GM12878 (cell line): ENCODE measurements at regions of chr6 and their contacts with region 1.

Region 1: DNA sequence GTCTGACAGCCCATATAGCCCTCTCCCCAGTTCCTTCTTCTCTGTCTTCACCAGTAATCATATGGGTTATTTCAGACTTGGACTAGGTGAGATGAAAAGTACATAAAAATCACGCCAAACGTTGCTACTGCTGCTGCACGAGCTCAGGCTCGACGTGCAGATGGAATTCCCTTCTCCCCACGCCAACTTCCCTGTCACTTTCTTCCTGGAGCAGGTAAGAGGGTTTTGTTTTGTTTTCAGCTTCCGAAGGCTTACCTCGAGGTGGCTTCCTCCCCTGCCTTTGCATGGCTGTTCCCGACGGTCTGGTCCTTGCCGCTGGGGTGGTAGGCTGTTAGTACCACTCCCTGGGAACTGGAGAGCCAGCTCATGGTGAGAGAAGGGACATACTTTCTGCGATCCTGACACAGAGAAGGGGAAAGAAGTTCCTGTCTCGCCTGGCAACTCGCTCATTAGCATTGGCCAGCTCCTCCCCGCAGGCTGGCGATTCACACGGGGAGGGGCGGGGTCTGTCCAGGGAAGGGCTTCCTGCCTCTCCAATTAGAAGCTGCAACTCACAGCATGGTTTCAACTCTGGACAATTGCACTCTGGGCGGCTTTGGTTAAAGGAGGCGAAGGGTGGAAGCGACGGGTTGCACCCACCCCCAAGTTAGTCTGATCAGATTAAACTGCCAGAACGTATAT is at the start of gene ARHGAP18:
- DNase-seq: peak; percentile 78
- ATAC-seq: peak; percentile 92
- H3K4me3 ChIP-seq: peak within 1 kb of the TSS; percentile 94
- H3K27ac ChIP-seq: peak within 1 kb of the TSS; percentile 73
- H3K4me1 ChIP-seq: peaks cover 17% of the 10 kb centered on the region
- H3K27me3 ChIP-seq: no peaks in the 10 kb centered on the region
- CTCF ChIP-seq: no peak
- EP300 ChIP-seq: no peak
- POLR2A ChIP-seq: peak; percentile 77
- RAD21 ChIP-seq: no peak
- polyA plus RNA-seq, gene ARHGAP18: 24.9 to 28.0 TPM

Region 2: DNA sequence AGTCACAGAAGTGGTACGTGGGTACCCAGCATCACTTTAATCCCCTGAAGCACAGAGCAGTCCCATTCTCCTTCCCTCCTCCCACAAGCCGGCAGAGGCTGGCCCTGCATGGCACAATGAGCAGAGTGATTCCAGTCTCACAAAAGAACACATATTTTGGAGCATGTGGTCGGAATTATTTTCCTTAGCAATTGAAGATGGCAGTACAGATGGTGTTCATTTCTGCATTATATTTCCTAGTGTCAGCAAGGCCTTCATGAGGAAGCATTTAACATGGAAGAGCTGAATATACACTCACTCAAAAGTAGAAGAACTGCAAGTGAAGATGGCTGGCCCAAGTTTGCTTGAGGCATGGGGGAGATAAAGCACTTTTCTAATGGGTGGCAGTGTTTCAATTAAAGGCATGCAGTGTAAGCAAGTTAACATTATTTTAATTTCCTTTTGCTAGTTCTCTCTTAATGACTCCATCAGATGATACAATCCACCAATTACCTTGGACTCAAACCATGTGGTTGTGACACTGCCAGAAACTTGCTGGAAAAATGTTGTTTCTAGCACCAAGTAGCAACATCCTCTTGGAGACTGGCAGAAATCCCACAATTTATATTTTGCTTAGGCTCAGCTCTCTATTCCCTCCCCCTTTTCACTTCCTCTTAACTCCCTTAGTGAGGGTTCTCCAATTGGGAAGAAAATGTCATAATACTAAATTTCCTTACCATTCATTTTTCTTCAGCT is 74.3 kb before region 1 on chr6:
- CTCF ChIA-PET with region 1: no interaction called
- POLR2A ChIA-PET with region 1: interaction called, 4 read pairs
- RAD21 ChIA-PET with region 1: interaction called, 11 read pairs
- SMC1A ChIA-PET with region 1: interaction called, 9 read pairs
- in situ Hi-C with region 1: no loop called
- intact Hi-C with region 1: no loop called
- DNase-seq: no peak
- ATAC-seq: no peak
- H3K4me3 ChIP-seq: no peak overlapping the region
- H3K27ac ChIP-seq: no peak overlapping the region
- H3K4me1 ChIP-seq: peaks cover 16% of the 10 kb centered on the region; the same call in 1 of the 2 replicates
- H3K27me3 ChIP-seq: no peaks in the 10 kb centered on the region
- CTCF ChIP-seq: no peak
- EP300 ChIP-seq: no peak
- POLR2A ChIP-seq: no peak
- RAD21 ChIP-seq: no peak

Region 3: GRCh38 chr6:129655334-129655733 is 54.6 kb before region 1 on chr6:
- CTCF ChIA-PET with region 1: interaction called, 3 read pairs
- POLR2A ChIA-PET with region 1: no interaction called
- RAD21 ChIA-PET with region 1: interaction called, 11 read pairs
- SMC1A ChIA-PET with region 1: interaction called, 26 read pairs
- in situ Hi-C with region 1: no loop called
- intact Hi-C with region 1: no loop called
- DNase-seq: no peak
- ATAC-seq: no peak
- H3K4me3 ChIP-seq: no peak overlapping the region
- H3K27ac ChIP-seq: no peak overlapping the region
- H3K4me1 ChIP-seq: peaks cover 46% of the 10 kb centered on the region
- H3K27me3 ChIP-seq: no peaks in the 10 kb centered on the region
- CTCF ChIP-seq: no peak
- EP300 ChIP-seq: no peak
- POLR2A ChIP-seq: no peak
- RAD21 ChIP-seq: no peak

Region 4: GRCh38 chr6:129683601-129684322 is 26.1 kb before region 1 on chr6:
- CTCF ChIA-PET with region 1: interaction called, 117 read pairs
- POLR2A ChIA-PET with region 1: interaction called, 115 read pairs
- RAD21 ChIA-PET with region 1: interaction called, 189 read pairs
- SMC1A ChIA-PET with region 1: interaction called, 434 read pairs
- in situ Hi-C with region 1: no loop called
- intact Hi-C with region 1: no loop called
- DNase-seq: peak; percentile 88
- ATAC-seq: peak; percentile 90
- H3K4me3 ChIP-seq: peak overlapping the region; percentile 30; the same call in 1 of the 2 replicates
- H3K27ac ChIP-seq: peak overlapping the region; percentile 93
- H3K4me1 ChIP-seq: peaks cover 48% of the 10 kb centered on the region
- H3K27me3 ChIP-seq: no peaks in the 10 kb centered on the region
- CTCF ChIP-seq: no peak
- EP300 ChIP-seq: peak; percentile 97 to 98
- POLR2A ChIP-seq: peak; percentile 38; the same call in 1 of the 2 replicates
- RAD21 ChIP-seq: peak; percentile 16; the same call in 1 of the 2 replicates

Region 5: GRCh38 chr6:129748212-129748900 is 38.4 kb after region 1 on chr6:
- CTCF ChIA-PET with region 1: interaction called, 8 read pairs
- POLR2A ChIA-PET with region 1: interaction called, 9 read pairs
- RAD21 ChIA-PET with region 1: interaction called, 15 read pairs
- SMC1A ChIA-PET with region 1: interaction called, 4 read pairs
- in situ Hi-C with region 1: no loop called
- intact Hi-C with region 1: no loop called
- DNase-seq: peak; percentile 82
- ATAC-seq: peak; percentile 85
- H3K4me3 ChIP-seq: peak overlapping the region; percentile 56
- H3K27ac ChIP-seq: peak overlapping the region; percentile 96
- H3K4me1 ChIP-seq: peaks cover 42% of the 10 kb centered on the region
- H3K27me3 ChIP-seq: no peaks in the 10 kb centered on the region
- CTCF ChIP-seq: no peak
- EP300 ChIP-seq: 0 out of 4 replicates have a peak, but pooled peaks of 1 of the 2 experiments have one; percentile 29
- POLR2A ChIP-seq: peak; percentile 51
- RAD21 ChIP-seq: no peak